BJ (cell line): ENCODE measurements at regions of chr22 and their contacts with region 1.

Region 1: GRCh38 chr22:28019881-28020871 is 101.1 kb upstream of the PITPNB start:
- DNase-seq: no peak
- H3K4me3 ChIP-seq: no peak overlapping the region
- H3K27me3 ChIP-seq: no peaks in the 10 kb centered on the region
- CTCF ChIP-seq: peak; percentile 98

Region 2: GRCh38 chr22:27705408-27706080 is 314.6 kb before region 1 on chr22:
- CTCF ChIA-PET with region 1: no interaction called
- POLR2A ChIA-PET with region 1: no interaction called
- DNase-seq: no peak
- H3K4me3 ChIP-seq: no peak overlapping the region
- H3K27me3 ChIP-seq: peaks cover 1% of the 10 kb centered on the region; the same call in 1 of the 2 replicates
- CTCF ChIP-seq: no peak

Region 3: GRCh38 chr22:28009272-28009827 is 10.8 kb before region 1 on chr22:
- CTCF ChIA-PET with region 1: interaction called, 10 read pairs
- POLR2A ChIA-PET with region 1: no interaction called
- DNase-seq: peak; percentile 35
- H3K4me3 ChIP-seq: no peak overlapping the region
- H3K27me3 ChIP-seq: no peaks in the 10 kb centered on the region
- CTCF ChIP-seq: peak; percentile 96

Region 4: GRCh38 chr22:28051787-28052356 is 31.7 kb after region 1 on chr22:
- CTCF ChIA-PET with region 1: interaction called, 18 read pairs
- POLR2A ChIA-PET with region 1: no interaction called
- DNase-seq: no peak
- H3K4me3 ChIP-seq: no peak overlapping the region
- H3K27me3 ChIP-seq: no peaks in the 10 kb centered on the region
- CTCF ChIP-seq: peak; percentile 93

Region 5: GRCh38 chr22:28594797-28595462 is 574.8 kb after region 1 on chr22:
- CTCF ChIA-PET with region 1: interaction called, 33 read pairs
- POLR2A ChIA-PET with region 1: no interaction called
- DNase-seq: peak; percentile 18
- H3K4me3 ChIP-seq: no peak overlapping the region
- H3K27me3 ChIP-seq: no peaks in the 10 kb centered on the region
- CTCF ChIP-seq: peak; percentile 69